Caco-2 (cell line): ENCODE measurements at regions of chr12 and their contacts with region 1.

Region 1: GRCh38 chr12:6613776-6614512 is 6.8 kb upstream of the CHD4 start:
- DNase-seq: peak; percentile 80 to 92
- H3K4me3 ChIP-seq: no peak overlapping the region
- H3K4me3 Mint-ChIP-seq: no peak overlapping the region
- H3K27ac Mint-ChIP-seq: peak overlapping the region; percentile 20
- H3K4me1 ChIP-seq: peaks cover 23% of the 10 kb centered on the region
- H3K4me1 Mint-ChIP-seq: peaks cover 7% of the 10 kb centered on the region
- H3K27me3 ChIP-seq: no peaks in the 10 kb centered on the region
- H3K27me3 Mint-ChIP-seq: no peaks in the 10 kb centered on the region
- CTCF ChIP-seq: peak in 1 of 2 experiments; percentile 21

Region 2: DNA sequence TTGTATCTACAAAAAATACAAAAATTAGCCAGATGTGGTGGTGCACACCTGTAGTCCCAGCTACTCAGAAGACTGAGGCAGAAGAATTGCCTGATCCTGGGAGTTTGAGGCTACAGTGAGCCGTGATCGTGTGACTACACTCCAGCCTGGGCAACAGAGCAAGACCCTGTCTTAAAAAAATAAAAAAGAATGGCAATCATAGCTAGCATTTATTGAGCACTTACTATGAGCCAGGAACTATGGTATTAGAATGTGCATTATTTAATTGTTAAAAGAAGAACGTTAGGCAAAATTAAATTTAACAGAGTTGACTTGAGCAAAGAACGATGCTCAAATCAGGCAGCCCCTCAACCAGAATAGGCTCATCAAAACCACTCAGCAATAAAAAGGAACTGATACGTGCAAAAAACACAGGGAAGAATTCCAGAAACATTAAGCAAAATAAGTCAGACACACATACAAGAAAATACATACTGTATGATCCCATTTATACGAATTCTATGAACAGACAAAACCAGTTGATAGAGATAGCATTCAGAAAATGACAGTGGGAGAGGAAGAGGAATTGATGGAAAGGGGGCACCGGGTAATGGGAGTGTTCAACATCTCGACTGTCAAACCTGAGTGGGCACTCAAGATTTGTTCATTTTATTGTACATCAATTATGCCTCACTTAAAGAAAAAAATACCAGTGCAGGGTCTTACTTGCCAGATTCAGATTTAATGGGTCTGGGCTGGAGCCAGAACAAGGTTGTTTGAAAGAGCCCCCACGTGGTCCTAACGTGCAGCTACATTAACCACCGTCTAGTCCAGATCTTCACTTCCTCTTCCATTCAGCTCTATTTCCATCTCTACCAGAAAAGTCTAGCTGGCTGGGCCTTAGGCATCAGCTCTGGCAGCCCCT is 246.6 kb before region 1 on chr12:
- CTCF ChIA-PET with region 1: no interaction called
- POLR2A ChIA-PET with region 1: no interaction called
- intact Hi-C with region 1: no loop called
- DNase-seq: peak in 1 of 2 experiments; percentile 29
- H3K4me3 ChIP-seq: no peak overlapping the region
- H3K4me3 Mint-ChIP-seq: no peak overlapping the region
- H3K27ac Mint-ChIP-seq: peak overlapping the region; percentile 12
- H3K4me1 ChIP-seq: peaks cover 25% of the 10 kb centered on the region
- H3K4me1 Mint-ChIP-seq: peaks cover 38% of the 10 kb centered on the region
- H3K27me3 ChIP-seq: no peaks in the 10 kb centered on the region
- H3K27me3 Mint-ChIP-seq: no peaks in the 10 kb centered on the region
- CTCF ChIP-seq: peak in 1 of 2 experiments; percentile 1

Region 3: DNA sequence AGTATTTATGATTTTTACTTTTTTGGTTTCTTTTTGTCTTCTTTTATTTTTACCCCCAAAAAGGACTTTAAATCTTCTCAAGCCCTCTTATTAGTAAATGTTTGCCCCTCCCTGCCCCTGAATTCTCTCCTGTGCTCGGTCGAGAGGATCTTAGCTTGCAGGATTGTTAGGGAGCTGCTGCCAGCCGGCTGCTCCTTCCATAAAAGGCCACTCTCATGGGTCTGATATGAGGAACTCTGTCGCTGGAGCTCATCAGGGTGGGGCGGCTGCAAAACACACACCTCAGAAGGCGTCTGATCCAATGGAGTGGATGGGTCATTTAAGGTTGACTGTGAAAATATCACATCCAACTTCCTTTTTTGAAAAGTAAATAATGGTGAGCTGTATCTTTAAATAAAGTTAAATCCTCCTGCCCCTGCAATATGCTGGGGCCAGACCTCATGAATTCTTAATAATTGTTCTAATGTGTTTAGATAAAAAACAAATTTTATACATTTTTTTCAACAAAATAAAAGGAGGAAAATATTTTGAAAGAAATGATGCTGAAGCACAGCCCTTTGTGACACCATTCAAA is 221.4 kb before region 1 on chr12:
- CTCF ChIA-PET with region 1: no interaction called
- POLR2A ChIA-PET with region 1: no interaction called
- intact Hi-C with region 1: no loop called
- DNase-seq: no peak
- H3K4me3 ChIP-seq: no peak overlapping the region
- H3K4me3 Mint-ChIP-seq: no peak overlapping the region
- H3K27ac Mint-ChIP-seq: no peak overlapping the region
- H3K4me1 ChIP-seq: no peaks in the 10 kb centered on the region
- H3K4me1 Mint-ChIP-seq: peaks cover 6% of the 10 kb centered on the region
- H3K27me3 ChIP-seq: no peaks in the 10 kb centered on the region
- H3K27me3 Mint-ChIP-seq: no peaks in the 10 kb centered on the region
- CTCF ChIP-seq: no peak

Region 4: DNA sequence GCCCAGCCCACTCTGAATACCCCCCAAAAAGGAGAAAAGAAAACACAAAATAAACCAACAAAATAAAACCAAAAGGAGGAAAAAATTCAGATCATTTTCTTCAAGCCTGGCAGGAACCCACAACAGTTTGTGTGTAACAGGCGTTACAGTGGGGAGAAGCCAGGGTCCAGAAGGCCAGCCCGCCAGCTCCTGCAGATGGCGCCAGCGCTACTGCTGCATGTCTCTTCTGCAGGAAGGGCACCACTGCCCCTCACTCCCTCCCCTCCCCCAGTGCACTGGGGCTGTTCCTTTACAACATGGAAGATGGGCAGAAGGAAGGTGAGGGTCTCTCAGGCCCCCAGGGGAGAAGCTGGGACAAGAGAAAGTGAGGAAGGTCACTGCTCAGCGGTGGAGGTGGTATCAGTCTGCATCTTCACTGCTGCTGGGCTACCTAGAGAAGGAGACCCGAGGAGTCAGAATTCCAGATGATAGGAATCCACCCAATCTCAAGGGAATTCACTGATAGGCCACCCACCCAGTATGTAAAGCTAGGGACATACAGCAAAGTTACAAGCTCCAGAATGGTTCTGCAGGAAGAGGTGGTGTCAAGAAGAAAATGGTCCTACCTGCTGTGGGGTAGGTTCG is 43.6 kb before region 1 on chr12:
- CTCF ChIA-PET with region 1: interaction called, 11 read pairs
- POLR2A ChIA-PET with region 1: no interaction called
- intact Hi-C with region 1: loop called (anchors 5 kb)
- DNase-seq: peak; percentile 82 to 84
- H3K4me3 ChIP-seq: no peak overlapping the region
- H3K4me3 Mint-ChIP-seq: peak overlapping the region; percentile 81
- H3K27ac Mint-ChIP-seq: no peak overlapping the region
- H3K4me1 ChIP-seq: no peaks in the 10 kb centered on the region
- H3K4me1 Mint-ChIP-seq: peaks cover 23% of the 10 kb centered on the region
- H3K27me3 ChIP-seq: no peaks in the 10 kb centered on the region
- H3K27me3 Mint-ChIP-seq: no peaks in the 10 kb centered on the region
- CTCF ChIP-seq: peak; percentile 76 to 82

Region 5: DNA sequence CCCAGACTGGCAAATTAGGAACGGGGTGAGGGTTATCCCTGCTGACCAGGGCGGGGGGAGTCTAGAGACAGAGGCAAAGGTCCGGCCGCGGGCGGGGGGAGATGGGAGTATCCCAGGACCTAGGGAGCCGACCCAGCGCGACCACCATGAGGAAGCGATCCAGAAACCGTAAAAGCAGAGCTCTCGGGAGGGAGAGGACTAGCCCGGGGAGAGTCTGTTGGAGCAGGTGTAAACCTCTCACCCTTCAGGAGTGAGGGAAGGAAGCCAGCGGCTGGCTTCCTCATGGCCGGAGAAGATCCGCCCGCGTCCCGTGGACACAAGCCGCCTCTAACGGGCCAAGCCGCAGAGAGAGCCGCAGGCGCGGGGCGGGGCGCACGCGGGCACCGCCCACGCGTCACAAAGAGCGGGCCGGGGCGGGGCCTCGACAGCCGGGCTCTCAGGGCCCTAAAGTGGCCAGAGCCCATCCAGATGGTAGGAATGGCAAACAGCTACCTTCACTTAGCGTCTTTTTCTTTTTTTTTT is 33.2 kb after region 1 on chr12 and contains the start of gene ACRBP:
- CTCF ChIA-PET with region 1: interaction called, 3 read pairs
- POLR2A ChIA-PET with region 1: no interaction called
- intact Hi-C with region 1: loop called (anchors 1 kb)
- DNase-seq: peak; percentile 62 to 75
- H3K4me3 ChIP-seq: peak within 1 kb of the TSS; percentile 26
- H3K4me3 Mint-ChIP-seq: peak within 1 kb of the TSS; percentile 79
- H3K27ac Mint-ChIP-seq: peak within 1 kb of the TSS; percentile 32
- H3K4me1 ChIP-seq: no peaks in the 10 kb centered on the region
- H3K4me1 Mint-ChIP-seq: peaks cover 7% of the 10 kb centered on the region
- H3K27me3 ChIP-seq: no peaks in the 10 kb centered on the region
- H3K27me3 Mint-ChIP-seq: peaks cover 6% of the 10 kb centered on the region
- CTCF ChIP-seq: no peak
- total RNA-seq, gene ACRBP: 0.73 and 1.3 TPM in 2 replicates

Region 6: GRCh38 chr12:6697584-6698351 is 83.8 kb after region 1 on chr12:
- CTCF ChIA-PET with region 1: interaction called, 3 read pairs
- POLR2A ChIA-PET with region 1: no interaction called
- intact Hi-C with region 1: loop called (anchors 1 kb)
- DNase-seq: peak; percentile 78 to 81
- H3K4me3 ChIP-seq: no peak overlapping the region
- H3K4me3 Mint-ChIP-seq: no peak overlapping the region
- H3K27ac Mint-ChIP-seq: no peak overlapping the region
- H3K4me1 ChIP-seq: peaks cover 5% of the 10 kb centered on the region
- H3K4me1 Mint-ChIP-seq: peaks cover 9% of the 10 kb centered on the region
- H3K27me3 ChIP-seq: peaks cover 5% of the 10 kb centered on the region
- H3K27me3 Mint-ChIP-seq: peaks cover 51% of the 10 kb centered on the region
- CTCF ChIP-seq: peak; percentile 90 to 93

Region 7: GRCh38 chr12:6825398-6826124 is 211.6 kb after region 1 on chr12:
- CTCF ChIA-PET with region 1: no interaction called
- POLR2A ChIA-PET with region 1: no interaction called
- intact Hi-C with region 1: loop called (anchors 5 kb)
- DNase-seq: peak; percentile 87 to 93
- H3K4me3 ChIP-seq: no peak overlapping the region
- H3K4me3 Mint-ChIP-seq: no peak overlapping the region
- H3K27ac Mint-ChIP-seq: no peak overlapping the region
- H3K4me1 ChIP-seq: peaks cover 23% of the 10 kb centered on the region
- H3K4me1 Mint-ChIP-seq: peaks cover 14% of the 10 kb centered on the region
- H3K27me3 ChIP-seq: no peaks in the 10 kb centered on the region; the same call in 1 of the 2 replicates
- H3K27me3 Mint-ChIP-seq: peaks cover 26% of the 10 kb centered on the region
- CTCF ChIP-seq: peak; percentile 97 to 98

Region 8: DNA sequence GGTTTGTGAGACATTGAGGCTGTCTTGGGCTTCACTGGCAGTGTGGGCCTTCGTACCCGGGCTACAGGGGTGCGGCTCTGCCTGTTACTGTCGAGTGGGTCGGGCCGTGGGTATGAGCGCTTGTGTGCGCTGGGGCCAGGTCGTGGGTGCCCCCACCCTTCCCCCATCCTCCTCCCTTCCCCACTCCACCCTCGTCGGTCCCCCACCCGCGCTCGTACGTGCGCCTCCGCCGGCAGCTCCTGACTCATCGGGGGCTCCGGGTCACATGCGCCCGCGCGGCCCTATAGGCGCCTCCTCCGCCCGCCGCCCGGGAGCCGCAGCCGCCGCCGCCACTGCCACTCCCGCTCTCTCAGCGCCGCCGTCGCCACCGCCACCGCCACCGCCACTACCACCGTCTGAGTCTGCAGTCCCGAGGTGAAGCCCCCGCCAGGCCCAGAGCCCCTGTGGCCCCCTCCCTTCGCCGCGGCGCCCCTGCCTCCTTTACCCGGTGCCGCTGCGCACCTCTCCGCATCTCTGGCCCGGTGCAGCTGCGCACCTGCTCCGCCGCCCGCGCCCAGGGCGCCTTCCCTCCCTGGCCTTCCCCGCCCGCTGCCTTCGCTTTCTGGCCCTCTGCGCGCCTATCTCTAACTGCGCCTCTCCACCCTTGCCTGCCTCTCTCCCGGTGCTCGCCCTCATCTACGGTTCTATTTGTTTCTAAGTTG is 300.5 kb after region 1 on chr12 and contains the start of gene ENO2:
- CTCF ChIA-PET with region 1: no interaction called
- POLR2A ChIA-PET with region 1: no interaction called
- intact Hi-C with region 1: no loop called
- DNase-seq: peak; percentile 63 to 73
- H3K4me3 ChIP-seq: peak within 1 kb of the TSS; percentile 69
- H3K4me3 Mint-ChIP-seq: peak within 1 kb of the TSS; percentile 96
- H3K27ac Mint-ChIP-seq: no peak within 1 kb of the TSS
- H3K4me1 ChIP-seq: peaks cover 14% of the 10 kb centered on the region
- H3K4me1 Mint-ChIP-seq: peaks cover 9% of the 10 kb centered on the region
- H3K27me3 ChIP-seq: no peaks in the 10 kb centered on the region
- H3K27me3 Mint-ChIP-seq: no peaks in the 10 kb centered on the region
- CTCF ChIP-seq: no peak
- total RNA-seq, gene ENO2: 23.2 and 25.3 TPM in 2 replicates